AG04449 (cell line): ENCODE measurements at regions of chr21 and their contacts with region 1.

Region 1: DNA sequence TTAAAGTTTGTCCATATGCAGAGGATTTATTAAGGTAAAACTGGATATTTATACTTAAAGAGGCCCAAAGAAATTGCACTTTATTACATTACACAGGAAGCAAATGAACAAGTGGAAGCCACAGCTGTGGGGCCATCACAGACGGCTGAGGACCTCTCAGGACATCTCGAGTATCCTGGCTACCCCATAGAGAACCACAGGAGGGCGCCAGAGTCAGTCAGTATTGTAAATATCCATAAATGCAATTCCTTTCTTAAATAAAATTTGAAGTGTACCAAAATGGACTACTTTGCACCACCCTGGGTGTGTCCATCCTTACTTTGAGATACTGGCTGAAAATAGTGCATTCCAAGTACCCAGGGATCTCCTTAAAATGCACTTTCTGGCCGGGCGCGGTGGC is 257.2 kb downstream of the MRPL39 start:
- DNase-seq: no peak
- H3K4me3 ChIP-seq: no peak overlapping the region
- CTCF ChIP-seq: peak; percentile 60

Region 2: DNA sequence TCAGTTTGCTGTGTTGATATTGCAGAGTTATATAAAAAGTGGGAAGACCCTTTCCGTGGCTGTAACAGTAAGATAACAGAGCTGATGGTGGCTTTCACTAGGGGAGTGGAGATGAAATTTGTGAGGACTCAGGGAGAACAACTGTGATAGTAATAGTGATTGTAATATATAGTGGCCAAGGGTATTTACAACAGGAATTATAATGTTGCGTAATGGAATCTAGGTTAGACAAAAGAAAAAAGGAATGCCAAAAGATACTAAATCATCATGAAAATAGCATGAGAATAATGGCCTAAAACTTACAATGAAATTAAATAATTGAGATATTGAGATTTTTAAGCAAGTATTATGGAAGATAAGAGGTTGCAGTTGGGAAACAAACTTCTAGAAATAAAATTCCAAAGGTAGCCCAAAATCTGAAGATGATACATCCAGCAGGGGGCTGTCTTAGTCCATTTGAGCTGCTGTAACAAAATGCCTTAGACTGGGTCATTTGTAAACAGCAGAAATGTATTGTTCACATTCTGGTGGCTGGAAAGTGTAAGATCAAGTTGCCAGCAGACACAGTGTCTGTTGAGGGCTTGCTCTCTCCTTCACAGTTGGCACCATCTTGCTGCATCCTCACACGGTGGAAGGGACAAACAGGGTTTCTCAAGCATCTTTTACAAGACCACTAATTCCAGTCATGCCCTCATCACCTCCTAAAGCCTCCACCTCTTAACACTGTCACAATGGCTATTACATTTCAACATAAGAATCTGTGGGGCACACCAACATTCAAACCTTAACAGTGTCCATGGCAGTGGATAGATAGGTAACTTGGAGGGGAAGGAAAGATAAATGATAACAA is 453.9 kb before region 1 on chr21:
- CTCF ChIA-PET with region 1: interaction called, 10 read pairs
- POLR2A ChIA-PET with region 1: no interaction called
- DNase-seq: no peak
- H3K4me3 ChIP-seq: no peak overlapping the region
- CTCF ChIP-seq: peak; percentile 51

Region 3: DNA sequence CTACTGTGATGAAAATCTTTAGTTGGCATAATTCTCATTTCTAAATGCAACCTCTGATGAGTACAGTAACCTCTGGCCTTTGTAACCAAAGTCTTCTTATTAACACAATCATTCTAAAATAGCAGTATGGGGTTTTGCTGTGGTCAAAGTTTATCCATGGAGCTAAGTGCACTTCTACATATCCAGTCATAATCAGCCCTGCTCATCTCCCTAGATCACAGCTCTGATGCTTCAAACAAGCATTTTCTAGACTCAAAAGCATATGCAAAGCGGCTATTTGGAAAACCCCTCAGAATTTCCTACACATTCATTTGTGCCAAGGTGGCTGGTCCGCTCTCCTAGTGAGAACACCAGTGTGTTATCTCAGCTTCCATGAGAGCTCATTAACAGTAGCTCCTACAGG is 161.4 kb before region 1 on chr21:
- CTCF ChIA-PET with region 1: no interaction called
- POLR2A ChIA-PET with region 1: no interaction called
- DNase-seq: no peak
- H3K4me3 ChIP-seq: no peak overlapping the region
- CTCF ChIP-seq: no peak

Region 4: GRCh38 chr21:25360593-25360992 is 10.5 kb after region 1 on chr21:
- CTCF ChIA-PET with region 1: interaction called, 27 read pairs
- POLR2A ChIA-PET with region 1: no interaction called
- DNase-seq: no peak
- H3K4me3 ChIP-seq: no peak overlapping the region
- CTCF ChIP-seq: no peak

Region 5: GRCh38 chr21:25370311-25370744 is 20.3 kb after region 1 on chr21:
- CTCF ChIA-PET with region 1: interaction called, 12 read pairs
- POLR2A ChIA-PET with region 1: no interaction called
- DNase-seq: peak; percentile 88
- H3K4me3 ChIP-seq: no peak overlapping the region; the same call in 1 of the 2 replicates
- CTCF ChIP-seq: no peak

Region 6: GRCh38 chr21:25449950-25450349 is 99.9 kb after region 1 on chr21:
- CTCF ChIA-PET with region 1: no interaction called
- POLR2A ChIA-PET with region 1: no interaction called
- DNase-seq: no peak
- H3K4me3 ChIP-seq: no peak overlapping the region
- CTCF ChIP-seq: no peak

Region 7: GRCh38 chr21:25639551-25640201 is 289.6 kb after region 1 on chr21:
- CTCF ChIA-PET with region 1: no interaction called
- POLR2A ChIA-PET with region 1: no interaction called
- DNase-seq: no peak
- H3K4me3 ChIP-seq: peak overlapping the region; percentile 64
- CTCF ChIP-seq: peak; percentile 58